ENCODE measurements at regions of chr2 and their contacts with region 1.

Region 1: DNA sequence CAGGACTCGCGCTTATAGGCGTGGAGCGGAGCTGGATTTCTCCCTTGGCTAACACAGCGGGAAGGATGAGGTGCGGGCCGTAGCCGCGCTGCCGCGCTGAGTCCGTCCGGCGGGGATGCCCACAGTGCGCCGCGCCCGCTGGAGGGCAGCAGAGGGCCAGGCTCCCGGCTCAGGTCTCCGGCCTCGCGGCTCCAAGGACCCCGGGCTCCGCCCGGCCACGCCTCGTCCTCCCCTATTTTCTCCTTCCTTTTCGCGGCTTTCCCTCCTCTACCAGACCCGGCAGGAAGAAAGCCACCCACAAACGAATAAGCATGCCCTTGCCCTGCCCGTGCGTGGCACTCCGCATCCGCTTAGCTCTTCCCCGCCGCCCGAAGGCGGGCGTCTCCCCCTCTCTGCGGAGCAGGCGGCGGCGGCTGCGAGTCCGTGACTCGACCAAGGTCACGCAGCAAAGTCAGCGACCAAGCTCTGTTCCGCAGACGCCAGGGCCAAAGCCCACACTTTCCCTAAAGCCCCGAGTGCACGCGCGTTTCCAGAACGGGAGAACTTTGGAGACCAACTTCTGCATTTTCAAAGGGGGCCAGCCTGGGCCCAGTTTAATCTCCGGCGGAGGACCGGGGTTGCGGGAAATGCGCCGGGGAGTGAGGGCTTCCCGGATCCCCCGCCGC is 48.6 kb downstream of the KCNIP3 start:
- DNase-seq: peak; percentile 86
- H3K4me3 ChIP-seq: peak overlapping the region; percentile 59
- H3K27ac ChIP-seq: peak overlapping the region; percentile 59
- H3K4me1 ChIP-seq: no peaks in the 10 kb centered on the region
- H3K27me3 ChIP-seq: peaks cover 26% of the 10 kb centered on the region
- CTCF ChIP-seq: peak; percentile 86

Region 2: DNA sequence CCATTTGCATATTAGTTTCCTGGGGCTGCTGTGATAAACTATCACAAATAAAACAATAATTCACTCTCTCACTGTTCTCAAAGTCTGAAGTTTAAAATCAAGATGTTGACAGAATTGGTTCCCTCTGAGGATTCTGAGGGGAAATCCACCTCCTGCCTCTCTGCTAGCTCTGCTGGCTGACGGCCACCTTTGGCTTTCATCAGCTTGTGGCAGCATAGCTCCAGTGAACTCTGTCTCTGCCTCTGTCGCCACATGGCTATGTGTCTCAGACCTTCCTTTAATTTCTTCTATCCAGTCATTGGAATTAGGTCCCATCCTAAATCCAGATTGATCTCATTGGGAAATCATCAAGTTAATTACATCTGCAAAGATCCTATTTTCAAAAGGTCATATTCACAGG is 207.2 kb after region 1 on chr2:
- intact Hi-C with region 1: no loop called
- DNase-seq: no peak
- H3K4me3 ChIP-seq: no peak overlapping the region
- H3K27ac ChIP-seq: no peak overlapping the region
- H3K4me1 ChIP-seq: no peaks in the 10 kb centered on the region
- H3K27me3 ChIP-seq: no peaks in the 10 kb centered on the region
- CTCF ChIP-seq: no peak

Region 3: DNA sequence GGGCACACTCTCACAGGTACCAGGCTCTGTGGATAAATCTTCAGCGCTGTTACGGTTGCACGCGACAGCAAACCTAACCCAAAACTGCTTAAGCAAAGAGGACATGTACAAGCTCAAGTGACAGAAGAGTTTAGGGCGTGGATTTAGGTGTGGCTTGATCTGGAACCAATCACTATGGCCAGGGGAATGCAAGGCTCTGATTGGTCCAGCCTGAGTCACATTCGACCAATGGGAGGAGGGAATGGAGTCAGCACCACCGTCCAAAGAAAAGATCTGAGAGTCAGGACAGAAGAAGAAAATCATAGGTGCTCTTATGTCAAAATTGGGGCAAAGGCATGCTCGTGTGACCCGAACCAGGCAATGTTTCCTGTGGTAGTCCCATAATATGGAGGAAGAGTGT is 385.1 kb after region 1 on chr2:
- intact Hi-C with region 1: loop called (anchors 10 kb)
- DNase-seq: no peak
- H3K4me3 ChIP-seq: no peak overlapping the region
- H3K27ac ChIP-seq: no peak overlapping the region
- H3K4me1 ChIP-seq: no peaks in the 10 kb centered on the region
- H3K27me3 ChIP-seq: no peaks in the 10 kb centered on the region
- CTCF ChIP-seq: no peak